ENCODE measurements at regions of chr12 and their contacts with region 1.

Region 1: GRCh38 chr12:4621511-4621910 is 27.3 kb downstream of the AKAP3 start:
- DNase-seq: no peak
- H3K4me3 ChIP-seq: no peak overlapping the region
- H3K27ac ChIP-seq: no peak overlapping the region
- H3K4me1 ChIP-seq: no peaks in the 10 kb centered on the region
- H3K27me3 ChIP-seq: peaks cover 0 to 3% of the 10 kb centered on the region in 2 donors
- CTCF ChIP-seq: no peak

Region 2: DNA sequence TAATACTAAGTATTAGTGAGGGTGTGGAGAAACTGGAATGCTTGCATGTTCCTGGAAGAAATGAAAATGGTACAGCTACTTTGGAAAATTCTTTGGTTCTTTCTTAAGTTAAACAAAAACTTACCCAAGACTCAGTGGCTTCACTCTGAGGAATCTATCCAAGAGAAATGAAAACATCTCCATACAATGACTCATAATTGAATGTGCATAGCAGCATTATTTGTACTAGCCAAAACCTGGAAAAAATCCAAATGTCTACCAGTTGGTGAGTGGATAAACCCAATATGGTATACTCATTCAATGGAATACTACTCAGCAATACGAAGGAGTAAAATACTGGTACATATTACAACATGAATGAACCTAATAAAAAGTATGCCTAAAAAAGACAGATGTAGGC is 850.6 kb before region 1 on chr12:
- intact Hi-C with region 1: loop called (anchors 5 kb)
- DNase-seq: no peak
- H3K4me3 ChIP-seq: no peak overlapping the region
- H3K27ac ChIP-seq: no peak overlapping the region
- H3K4me1 ChIP-seq: no peaks in the 10 kb centered on the region
- H3K27me3 ChIP-seq: no peaks in the 10 kb centered on the region
- CTCF ChIP-seq: no peak

Measured in tibial artery (tissue), 4 donors.